ENCODE measurements at regions of chr19 and their contacts with region 1.

Region 1: DNA sequence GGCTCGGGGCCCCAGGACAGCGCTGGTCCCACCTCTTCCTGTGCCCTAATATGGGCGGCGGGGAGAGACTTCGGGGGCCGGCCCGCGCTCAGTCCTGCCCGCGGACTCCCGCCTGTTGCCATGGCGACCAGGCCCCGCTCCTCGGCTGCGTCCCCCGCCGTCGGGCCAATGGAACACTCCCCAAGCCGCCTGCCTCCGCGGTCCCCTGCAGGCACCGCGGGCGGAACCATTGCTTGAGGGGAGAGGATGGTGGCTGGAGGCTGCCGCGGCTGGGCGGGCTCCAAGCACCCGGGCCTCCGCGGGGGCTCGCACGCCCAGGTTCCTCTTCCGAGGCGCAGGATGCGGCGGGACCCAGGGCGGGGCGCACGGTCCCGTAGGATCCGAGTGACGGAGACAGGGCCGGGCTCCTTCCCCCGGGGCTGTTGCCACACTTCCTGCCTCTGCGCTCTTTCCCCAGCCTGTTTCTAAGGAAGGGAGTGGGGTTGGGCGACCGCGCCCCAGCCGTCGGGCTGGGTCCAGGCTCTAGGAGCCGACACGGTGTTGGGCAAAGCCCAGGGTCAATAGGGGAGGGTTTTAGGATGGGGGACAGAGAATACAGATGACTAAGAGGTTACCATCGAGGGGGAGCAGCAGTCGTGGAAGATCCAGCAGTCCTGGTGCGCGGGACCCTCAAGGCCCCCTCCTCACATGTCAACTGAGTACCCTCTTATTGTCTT is 1.2 kb upstream of the JUNB start:
- DNase-seq: peak; percentile 97
- ATAC-seq: peak; percentile 50
- H3K4me3 Mint-ChIP-seq: peak overlapping the region; percentile 92
- H3K27ac Mint-ChIP-seq: peak overlapping the region; percentile 97
- H3K4me1 Mint-ChIP-seq: peaks cover 35% of the 10 kb centered on the region
- H3K27me3 Mint-ChIP-seq: no peaks in the 10 kb centered on the region

Region 2: GRCh38 chr19:12722566-12723380 is 67.3 kb before region 1 on chr19:
- CTCF ChIA-PET with region 1: interaction called, 12 read pairs
- POLR2A ChIA-PET with region 1: interaction called, 20 read pairs
- DNase-seq: peak; percentile 98
- ATAC-seq: peak; percentile 91
- H3K4me3 Mint-ChIP-seq: peak overlapping the region; percentile 85
- H3K27ac Mint-ChIP-seq: peak overlapping the region; percentile 86
- H3K4me1 Mint-ChIP-seq: peaks cover 29% of the 10 kb centered on the region
- H3K27me3 Mint-ChIP-seq: no peaks in the 10 kb centered on the region

Region 3: DNA sequence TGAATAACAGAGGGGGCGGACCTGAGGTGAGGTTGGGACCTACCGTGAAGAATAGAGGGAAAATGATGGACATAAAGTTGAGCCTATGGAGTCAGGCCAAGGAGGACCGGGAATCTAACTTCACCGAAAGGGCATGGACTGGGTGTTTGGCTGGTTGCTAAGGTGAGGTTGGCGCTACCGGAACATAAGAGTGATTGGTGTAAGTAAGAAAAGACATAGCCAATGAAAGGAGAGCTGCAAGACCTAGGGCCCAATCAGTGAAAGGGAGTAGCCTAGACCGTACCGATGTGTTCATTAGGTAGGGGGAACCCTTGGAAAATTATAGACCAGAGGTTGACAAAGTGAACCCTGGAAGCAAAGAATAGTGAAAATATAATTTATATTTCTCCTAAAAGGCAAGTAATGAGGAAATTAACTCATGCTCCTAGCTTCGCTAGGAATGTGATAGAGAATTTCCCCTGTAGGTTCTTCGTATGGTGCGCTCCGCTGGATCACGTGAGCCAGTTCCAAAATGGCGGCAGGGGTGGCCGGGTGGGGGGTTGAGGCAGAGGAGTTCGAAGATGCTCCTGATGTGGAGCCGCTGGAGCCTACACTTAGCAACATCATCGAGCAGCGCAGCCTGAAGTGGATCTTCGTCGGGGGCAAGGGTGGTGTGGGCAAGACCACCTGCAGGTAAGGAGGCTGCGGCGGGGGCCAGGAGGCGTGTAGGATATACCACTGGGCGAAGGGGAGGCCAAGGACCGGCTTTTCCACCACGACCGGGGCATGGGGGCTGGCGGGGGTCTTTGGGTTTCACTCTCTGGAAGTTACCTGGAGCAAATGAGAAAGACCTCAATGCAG is 52.8 kb before region 1 on chr19 and contains the start of gene GET3:
- CTCF ChIA-PET with region 1: interaction called, 14 read pairs
- POLR2A ChIA-PET with region 1: interaction called, 24 read pairs
- DNase-seq: peak; percentile 89
- ATAC-seq: peak; percentile 85
- H3K4me3 Mint-ChIP-seq: peak within 1 kb of the TSS; percentile 100
- H3K27ac Mint-ChIP-seq: peak within 1 kb of the TSS; percentile 98
- H3K4me1 Mint-ChIP-seq: peaks cover 43% of the 10 kb centered on the region
- H3K27me3 Mint-ChIP-seq: no peaks in the 10 kb centered on the region
- total RNA-seq, gene GET3: 66.8 to 71.5 TPM

Region 4: DNA sequence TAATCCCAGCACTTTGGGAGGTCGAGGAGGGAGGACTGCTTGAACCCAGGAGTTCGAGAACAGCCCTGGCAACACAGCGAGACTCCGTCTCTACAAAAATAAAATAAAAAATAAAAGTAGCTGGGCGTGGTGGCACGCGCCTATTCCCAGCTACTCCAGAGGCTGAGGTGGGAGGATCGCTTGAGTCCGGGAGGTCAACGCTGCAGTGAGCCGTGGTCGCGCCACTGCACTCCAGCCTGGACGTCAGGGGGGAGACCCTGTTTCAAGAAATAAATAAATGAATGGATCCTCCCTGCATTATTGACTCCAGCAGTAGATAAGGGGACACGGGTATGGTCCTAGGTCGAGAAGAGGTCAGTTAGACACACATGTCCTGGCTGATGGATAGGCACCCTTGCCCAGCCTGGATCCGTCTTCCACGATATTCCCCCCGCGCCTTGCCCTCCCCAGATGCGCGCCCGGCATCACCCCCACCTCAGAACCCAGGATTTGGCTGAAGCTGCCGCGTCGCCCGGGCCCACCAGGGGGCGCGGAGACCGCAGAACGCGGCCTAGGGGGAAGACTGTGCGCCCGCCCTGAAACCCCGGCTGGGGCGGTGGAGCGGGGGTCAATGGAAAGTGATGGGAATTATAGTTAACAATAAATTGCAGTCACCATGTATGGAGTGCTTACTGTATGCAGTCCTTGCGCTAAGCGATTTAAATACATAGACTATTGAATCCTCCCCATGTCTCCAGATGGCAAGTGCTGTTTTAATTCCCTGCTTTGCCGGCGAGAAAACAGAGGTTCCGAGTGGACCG is 12.6 kb before region 1 on chr19:
- CTCF ChIA-PET with region 1: interaction called, 390 read pairs
- POLR2A ChIA-PET with region 1: interaction called, 380 read pairs
- DNase-seq: peak; percentile 85
- ATAC-seq: peak; percentile 48
- H3K4me3 Mint-ChIP-seq: peak overlapping the region; percentile 72
- H3K27ac Mint-ChIP-seq: peak overlapping the region; percentile 85
- H3K4me1 Mint-ChIP-seq: peaks cover 48% of the 10 kb centered on the region
- H3K27me3 Mint-ChIP-seq: no peaks in the 10 kb centered on the region

Region 5: GRCh38 chr19:12806239-12807081 is 16.4 kb after region 1 on chr19 and contains the start of gene RNASEH2A:
- CTCF ChIA-PET with region 1: interaction called, 4 read pairs
- POLR2A ChIA-PET with region 1: interaction called, 34 read pairs
- DNase-seq: peak; percentile 92
- ATAC-seq: peak; percentile 89
- H3K4me3 Mint-ChIP-seq: peak within 1 kb of the TSS; percentile 97
- H3K27ac Mint-ChIP-seq: peak within 1 kb of the TSS; percentile 95
- H3K4me1 Mint-ChIP-seq: peaks cover 28% of the 10 kb centered on the region
- H3K27me3 Mint-ChIP-seq: no peaks in the 10 kb centered on the region
- total RNA-seq, gene RNASEH2A: 49.2 to 64.0 TPM

Region 6: DNA sequence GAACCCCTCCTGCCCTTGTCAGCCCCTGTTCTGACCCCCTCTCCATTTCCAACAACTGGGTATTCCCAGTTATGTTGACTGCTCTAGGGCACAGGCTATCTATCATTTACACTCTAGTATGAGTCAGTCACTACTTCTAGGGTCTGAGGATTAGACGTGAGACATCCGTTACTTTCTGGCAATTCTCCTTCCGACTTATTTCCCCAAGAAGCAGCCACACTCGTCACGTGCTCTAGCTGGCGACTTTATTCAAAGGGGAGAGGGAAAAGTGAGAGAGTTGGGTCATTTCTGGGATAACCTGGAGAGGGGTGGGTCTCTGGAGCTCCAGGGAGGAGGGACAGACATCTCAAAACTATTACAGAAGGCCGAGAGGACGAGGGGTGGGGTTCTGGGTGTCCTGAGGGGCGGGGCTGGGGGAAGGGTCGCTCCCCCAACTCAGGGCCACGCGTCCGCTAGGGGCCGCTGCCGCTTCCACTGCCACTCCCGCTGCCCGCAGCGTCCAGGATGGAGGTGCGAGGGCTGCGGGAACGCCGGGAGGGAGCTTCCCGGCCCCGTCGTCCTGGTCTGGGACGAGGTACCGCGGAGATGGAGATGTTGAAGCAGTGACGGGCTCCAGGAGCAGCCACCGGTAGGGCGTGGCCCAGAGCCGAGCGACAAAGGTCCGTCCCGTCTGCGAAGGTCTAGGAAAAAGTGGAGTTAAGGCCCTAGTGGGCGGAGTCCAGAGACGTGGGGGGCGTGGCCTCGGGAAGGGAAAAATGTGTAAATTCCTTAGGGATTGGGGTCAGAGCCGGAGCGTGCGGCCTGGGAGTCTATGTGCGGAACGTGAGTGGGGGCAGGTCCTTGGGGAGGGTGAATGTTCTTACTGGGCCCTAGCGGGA is 35.4 kb after region 1 on chr19:
- CTCF ChIA-PET with region 1: no interaction called
- POLR2A ChIA-PET with region 1: no interaction called
- DNase-seq: no peak
- ATAC-seq: peak; percentile 43
- H3K4me3 Mint-ChIP-seq: no peak overlapping the region
- H3K27ac Mint-ChIP-seq: no peak overlapping the region
- H3K4me1 Mint-ChIP-seq: peaks cover 9% of the 10 kb centered on the region
- H3K27me3 Mint-ChIP-seq: peaks cover 27% of the 10 kb centered on the region

Measured in activated CD8-positive, alpha-beta T cell treated with anti-CD3 and anti-CD28 coated beads, Interleukin-2, amount 10 ng/mL, durations not matched to agents 7 days and 5 days (primary cell).